B cell (primary cell): ENCODE measurements at regions of chr5 and their contacts with region 1.

Region 1: DNA sequence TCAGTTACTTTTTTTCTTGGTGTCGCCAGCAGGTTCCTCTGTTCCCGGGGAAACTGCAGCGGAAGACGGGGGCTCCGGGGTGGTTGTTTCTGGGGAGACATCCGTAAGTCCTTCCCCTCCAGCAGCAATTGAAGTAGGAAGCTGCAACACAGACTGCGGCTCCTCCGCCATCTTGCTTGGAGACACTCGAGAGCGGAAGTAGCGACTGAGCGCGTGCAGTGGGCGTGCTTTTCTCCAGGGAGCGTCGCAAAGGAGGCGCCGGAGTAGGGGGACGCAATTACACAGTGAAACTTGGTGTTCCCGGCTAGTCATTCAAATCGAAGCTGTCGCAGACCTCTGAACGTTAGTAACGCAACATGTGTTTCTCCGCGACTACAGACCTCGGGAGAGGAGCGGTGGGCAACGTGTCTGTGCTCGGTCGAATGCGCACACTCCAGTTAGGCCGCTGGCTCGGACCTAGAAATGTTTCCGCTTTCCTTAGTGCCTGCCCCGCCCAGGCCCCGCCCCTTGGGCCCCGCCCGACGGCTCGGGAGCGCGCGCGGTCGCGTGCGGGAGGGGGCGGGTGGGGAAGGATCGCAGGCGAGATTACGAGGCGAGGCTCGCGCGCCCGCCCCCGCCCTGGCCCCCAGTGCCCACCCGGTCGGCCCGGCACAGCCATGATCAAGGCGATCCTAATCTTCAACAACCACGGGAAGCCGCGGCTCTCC is at the starts of genes AP3S1 and ATG12:
- DNase-seq: peak; percentile 98
- ATAC-seq: peak; percentile 81
- H3K4me3 ChIP-seq: peak within 1 kb of the TSS; percentile 81 to 96 (median 93)
- H3K4me3 Mint-ChIP-seq: peak within 1 kb of the TSS; percentile 100
- H3K27ac ChIP-seq: peak within 1 kb of the TSS; percentile 89 to 94
- H3K27ac Mint-ChIP-seq: peak within 1 kb of the TSS; percentile 100
- H3K4me1 ChIP-seq: peaks cover 41 to 45% of the 10 kb centered on the region in 2 donors
- H3K4me1 Mint-ChIP-seq: peaks cover 72% of the 10 kb centered on the region
- H3K27me3 ChIP-seq: no peaks in the 10 kb centered on the region
- H3K27me3 Mint-ChIP-seq: no peaks in the 10 kb centered on the region
- CTCF ChIP-seq: no peak
- total RNA-seq, gene AP3S1: 37.1 and 47.6 TPM in 2 replicates
- total RNA-seq, gene ATG12: 97.5 and 101 TPM in 2 replicates

Region 2: DNA sequence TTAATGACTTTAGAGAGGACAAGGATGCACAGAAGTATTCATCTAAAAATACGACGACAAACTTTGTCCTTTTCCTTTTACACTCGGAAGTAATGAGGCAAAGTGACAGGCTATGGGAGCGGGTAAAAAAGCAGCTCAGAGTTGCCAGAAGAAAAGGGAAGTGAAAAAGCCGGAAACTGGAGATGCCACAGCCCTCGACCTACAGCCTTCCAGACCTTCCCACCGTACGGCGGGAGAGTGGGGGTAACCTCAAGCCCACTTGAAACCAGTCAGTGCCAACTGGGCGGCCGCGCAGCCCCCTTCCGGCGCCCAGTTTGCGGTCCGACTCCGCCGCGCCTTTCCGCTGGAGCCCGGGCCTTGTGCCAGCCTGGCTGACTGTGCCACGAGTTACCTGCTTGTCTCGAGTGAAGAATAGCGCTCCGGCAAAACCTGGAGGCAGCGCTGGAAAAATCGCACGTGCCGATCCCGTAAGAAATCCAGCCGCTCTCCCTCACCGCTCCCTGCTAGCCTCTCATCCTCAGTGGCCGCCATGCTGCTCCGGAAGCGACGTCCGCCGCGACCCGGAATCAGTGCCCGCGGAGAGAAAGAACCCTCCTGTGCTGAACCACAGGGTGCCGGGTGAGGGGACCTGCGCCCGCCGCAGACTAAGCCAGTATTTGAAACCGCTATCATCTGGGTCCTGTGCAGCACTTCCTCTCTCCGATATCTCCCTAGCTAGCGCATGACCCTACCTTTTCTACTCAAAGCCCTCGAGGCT is 579.0 kb before region 1 on chr5 and contains the start of gene PGGT1B:
- CTCF ChIA-PET with region 1: no interaction called
- POLR2A ChIA-PET with region 1: no interaction called
- intact Hi-C with region 1: loop called (anchors 1 kb)
- DNase-seq: peak; percentile 84
- ATAC-seq: peak; percentile 90
- H3K4me3 ChIP-seq: peak within 1 kb of the TSS; percentile 78 to 97 (median 87)
- H3K4me3 Mint-ChIP-seq: peak within 1 kb of the TSS; percentile 92
- H3K27ac ChIP-seq: peak within 1 kb of the TSS; percentile 88 to 92
- H3K27ac Mint-ChIP-seq: peak within 1 kb of the TSS; percentile 92
- H3K4me1 ChIP-seq: peaks cover 20 to 26% of the 10 kb centered on the region in 2 donors
- H3K4me1 Mint-ChIP-seq: peaks cover 49% of the 10 kb centered on the region
- H3K27me3 ChIP-seq: no peaks in the 10 kb centered on the region
- H3K27me3 Mint-ChIP-seq: no peaks in the 10 kb centered on the region
- CTCF ChIP-seq: no peak
- total RNA-seq, gene PGGT1B: 63.4 and 64.8 TPM in 2 replicates

Region 3: DNA sequence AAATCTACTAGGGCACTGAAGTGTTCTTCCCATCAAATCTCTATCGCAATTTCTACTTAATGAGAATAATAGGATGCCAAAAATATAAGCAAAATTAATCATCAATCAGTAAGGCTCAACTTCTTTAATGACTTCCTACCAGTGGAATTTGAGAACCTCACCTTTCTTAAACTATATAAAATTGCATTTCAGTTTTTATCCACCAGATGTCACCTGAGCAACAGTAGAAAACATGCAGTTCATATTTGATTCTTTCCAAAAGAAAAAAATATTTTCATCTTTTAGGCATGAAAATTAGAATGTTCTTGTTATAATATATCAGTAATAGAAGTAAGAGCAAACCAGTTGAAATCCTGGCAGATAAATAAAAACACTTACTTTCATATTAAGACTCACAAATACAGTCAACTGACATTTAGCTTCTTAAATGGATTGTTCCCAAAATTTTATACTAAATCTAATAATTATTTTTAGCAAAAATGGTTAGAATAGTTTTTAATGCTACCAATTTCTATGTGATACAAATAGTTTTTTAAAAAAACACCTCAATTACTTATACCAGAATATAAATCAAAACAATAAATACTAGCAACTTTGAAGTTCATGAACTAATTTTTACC is 531.7 kb before region 1 on chr5:
- CTCF ChIA-PET with region 1: interaction called, 4 read pairs
- POLR2A ChIA-PET with region 1: no interaction called
- intact Hi-C with region 1: loop called (anchors 2 kb)
- DNase-seq: peak; percentile 63
- ATAC-seq: peak; percentile 54
- H3K4me3 ChIP-seq: no peak overlapping the region
- H3K4me3 Mint-ChIP-seq: no peak overlapping the region
- H3K27ac ChIP-seq: no peak overlapping the region
- H3K27ac Mint-ChIP-seq: no peak overlapping the region
- H3K4me1 ChIP-seq: no peaks in the 10 kb centered on the region
- H3K4me1 Mint-ChIP-seq: no peaks in the 10 kb centered on the region
- H3K27me3 ChIP-seq: peaks cover 0 to 5% (median 3%) of the 10 kb centered on the region in 4 experiments
- H3K27me3 Mint-ChIP-seq: peaks cover 3% of the 10 kb centered on the region
- CTCF ChIP-seq: peak; percentile 89

Region 4: DNA sequence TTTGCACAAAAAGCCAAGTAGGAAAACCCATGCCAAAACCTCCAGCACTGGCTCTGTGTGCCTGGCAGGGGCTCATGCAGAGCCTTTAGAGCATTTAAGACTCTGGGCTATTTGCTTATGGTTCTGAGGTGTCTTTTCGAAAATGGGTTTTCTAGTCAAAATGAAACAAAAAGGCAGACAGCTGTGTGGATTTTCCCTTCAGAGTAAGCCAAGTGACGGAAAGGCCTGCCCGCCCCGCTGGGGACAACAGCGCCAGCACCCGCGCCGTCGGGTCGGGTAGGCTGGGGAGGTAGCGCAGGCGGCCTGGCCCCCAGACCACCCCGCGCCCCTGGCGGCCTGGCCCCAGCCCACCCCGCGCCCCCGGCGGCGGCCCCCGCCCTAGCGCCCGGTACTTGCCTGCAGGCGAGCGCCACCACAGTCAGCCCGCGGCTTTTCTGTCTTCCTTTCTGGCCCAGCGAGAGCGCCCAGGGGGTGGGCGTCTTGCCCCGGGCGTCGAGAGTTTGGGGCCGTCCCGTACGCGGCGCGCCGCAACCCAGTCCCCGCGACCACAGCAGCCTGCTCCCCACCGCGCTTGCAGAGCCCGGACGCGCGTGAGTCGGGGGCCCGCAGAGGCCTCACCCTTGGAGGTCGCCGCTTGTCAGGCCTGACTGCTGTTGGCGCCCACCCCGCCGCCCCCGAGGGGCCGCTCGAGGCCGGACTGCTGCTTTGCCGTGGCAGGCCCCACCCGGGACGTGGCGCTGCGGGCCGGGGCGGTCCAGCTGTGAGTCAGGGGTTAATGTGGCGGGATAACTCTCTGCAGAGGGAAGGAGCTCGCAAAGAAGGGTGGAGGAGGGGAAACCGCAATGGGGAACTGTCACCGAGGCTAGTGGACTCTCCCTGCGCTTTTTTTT is 239.6 kb before region 1 on chr5 and contains the start of gene TICAM2:
- CTCF ChIA-PET with region 1: interaction called, 4 read pairs
- POLR2A ChIA-PET with region 1: no interaction called
- intact Hi-C with region 1: loop called (anchors 1 kb)
- DNase-seq: peak; percentile 86
- ATAC-seq: peak; percentile 80
- H3K4me3 ChIP-seq: peak within 1 kb of the TSS; percentile 51 to 87 (median 82)
- H3K4me3 Mint-ChIP-seq: peak within 1 kb of the TSS; percentile 94
- H3K27ac ChIP-seq: peak within 1 kb of the TSS; percentile 71 to 91
- H3K27ac Mint-ChIP-seq: peak within 1 kb of the TSS; percentile 98
- H3K4me1 ChIP-seq: peaks cover 38% of the 10 kb centered on the region in 2 donors
- H3K4me1 Mint-ChIP-seq: peaks cover 43% of the 10 kb centered on the region
- H3K27me3 ChIP-seq: no peaks in the 10 kb centered on the region
- H3K27me3 Mint-ChIP-seq: no peaks in the 10 kb centered on the region
- CTCF ChIP-seq: peak; percentile 54
- total RNA-seq, gene TICAM2: 4.9 and 5.4 TPM in 2 replicates

Region 5: DNA sequence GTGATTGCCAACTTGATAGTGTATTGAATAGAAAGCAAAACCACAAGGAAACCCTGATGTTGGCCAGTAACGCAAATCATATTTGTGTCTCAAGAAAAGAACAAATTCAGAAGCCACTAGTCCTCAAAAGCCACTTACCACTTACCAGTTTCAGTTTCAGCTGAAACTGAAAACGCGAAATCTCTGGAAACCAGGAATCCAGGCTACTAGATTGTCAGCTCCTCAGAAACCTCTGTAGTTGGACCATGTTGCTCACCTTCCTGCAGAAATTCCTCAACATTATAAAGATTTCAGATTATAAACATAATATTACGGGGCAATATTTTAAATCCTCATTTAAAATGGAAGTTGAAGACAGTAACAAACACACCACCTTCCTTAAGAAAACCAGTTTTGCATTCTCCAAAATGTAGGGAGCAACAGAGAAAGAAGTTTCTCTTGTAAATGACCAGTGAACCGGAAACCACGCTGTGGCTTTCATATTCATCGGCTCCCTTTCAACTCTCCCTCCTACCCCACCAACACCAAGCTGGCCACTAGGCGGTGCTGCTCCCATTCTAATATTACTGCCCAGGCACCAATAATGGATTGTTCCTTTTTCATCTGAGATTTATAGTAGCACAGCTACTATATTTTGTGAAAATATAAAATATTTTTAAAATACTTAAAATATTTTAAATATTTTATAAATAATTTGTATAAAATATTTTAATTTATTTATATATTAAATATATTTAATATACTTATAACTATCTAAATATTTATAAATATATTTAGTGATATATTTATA is 207.0 kb before region 1 on chr5:
- CTCF ChIA-PET with region 1: interaction called, 21 read pairs
- POLR2A ChIA-PET with region 1: no interaction called
- intact Hi-C with region 1: loop called (anchors 1 kb)
- DNase-seq: peak; percentile 87
- ATAC-seq: peak; percentile 99
- H3K4me3 ChIP-seq: peak overlapping the region in 4 of 5 experiments; percentile 15 to 43 (median 20)
- H3K4me3 Mint-ChIP-seq: peak overlapping the region; percentile 67
- H3K27ac ChIP-seq: no peak overlapping the region
- H3K27ac Mint-ChIP-seq: no peak overlapping the region
- H3K4me1 ChIP-seq: peaks cover 5 to 6% of the 10 kb centered on the region in 2 donors
- H3K4me1 Mint-ChIP-seq: peaks cover 7% of the 10 kb centered on the region
- H3K27me3 ChIP-seq: peaks cover 0 to 12% (median 6%) of the 10 kb centered on the region in 4 experiments
- H3K27me3 Mint-ChIP-seq: peaks cover 19% of the 10 kb centered on the region
- CTCF ChIP-seq: peak; percentile 94

Region 6: DNA sequence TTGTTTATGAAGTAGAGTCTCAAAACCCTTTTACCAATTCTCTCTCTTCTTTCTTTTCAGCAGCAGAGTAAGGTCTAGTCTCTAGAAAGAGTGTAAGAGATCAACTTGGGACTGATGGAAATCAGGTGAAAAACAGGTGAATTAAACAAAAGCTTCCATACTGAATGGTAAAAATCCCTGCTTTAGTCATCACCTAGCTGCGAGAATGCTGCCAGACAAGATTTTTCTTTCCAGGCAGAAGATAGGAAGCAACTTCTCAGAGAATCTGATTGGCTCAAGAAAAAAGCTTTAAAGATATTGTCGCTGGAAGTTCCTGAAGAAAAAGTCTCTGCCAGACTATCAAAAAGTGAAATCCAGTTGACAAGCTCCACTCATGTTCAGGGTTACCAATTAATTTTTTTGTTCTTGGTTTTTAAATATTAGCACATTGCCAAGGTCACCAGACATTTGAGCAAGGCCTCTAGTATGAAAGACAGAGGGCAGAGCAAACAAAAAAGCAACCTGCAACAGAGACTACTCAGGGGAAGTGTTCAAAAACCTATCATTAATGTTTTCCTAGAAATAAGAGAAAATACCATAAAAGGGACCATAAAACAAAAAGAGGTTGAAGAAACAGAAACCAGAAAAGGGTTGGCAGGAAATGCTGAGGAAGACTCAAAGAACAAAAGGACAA is 34.4 kb before region 1 on chr5:
- CTCF ChIA-PET with region 1: no interaction called
- POLR2A ChIA-PET with region 1: no interaction called
- intact Hi-C with region 1: no loop called
- DNase-seq: no peak
- ATAC-seq: no peak
- H3K4me3 ChIP-seq: no peak overlapping the region
- H3K4me3 Mint-ChIP-seq: no peak overlapping the region
- H3K27ac ChIP-seq: no peak overlapping the region
- H3K27ac Mint-ChIP-seq: no peak overlapping the region
- H3K4me1 ChIP-seq: no peaks in the 10 kb centered on the region
- H3K4me1 Mint-ChIP-seq: no peaks in the 10 kb centered on the region
- H3K27me3 ChIP-seq: peaks cover 0 to 3% (median 1%) of the 10 kb centered on the region in 4 experiments
- H3K27me3 Mint-ChIP-seq: peaks cover 22% of the 10 kb centered on the region
- CTCF ChIP-seq: no peak

Region 7: DNA sequence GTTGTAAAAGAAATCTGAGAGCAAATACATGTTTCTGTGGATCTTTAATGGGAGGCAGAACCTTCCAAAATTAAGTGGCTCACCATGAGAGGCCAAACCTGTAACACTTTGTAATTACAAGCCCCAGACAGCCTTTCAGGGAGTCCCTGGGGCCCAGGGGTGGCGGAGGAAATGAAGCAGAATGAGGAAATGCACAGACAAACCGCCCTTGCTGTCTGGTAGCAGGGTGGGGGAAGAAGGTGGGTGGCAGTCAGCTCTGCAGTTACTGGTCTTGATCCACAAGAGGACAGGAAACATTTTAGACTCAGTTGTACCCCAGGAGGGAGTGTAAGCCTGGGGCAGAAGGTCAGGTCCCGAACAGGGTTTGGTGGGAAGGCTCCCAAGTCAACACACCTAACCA is 197.3 kb after region 1 on chr5:
- CTCF ChIA-PET with region 1: interaction called, 3 read pairs
- POLR2A ChIA-PET with region 1: no interaction called
- intact Hi-C with region 1: loop called (anchors 2 kb)
- DNase-seq: peak; percentile 70
- ATAC-seq: peak; percentile 98
- H3K4me3 ChIP-seq: peak overlapping the region in 1 of 5 experiments; percentile 20
- H3K4me3 Mint-ChIP-seq: peak overlapping the region; percentile 65
- H3K27ac ChIP-seq: peak overlapping the region; percentile 34 to 67
- H3K27ac Mint-ChIP-seq: peak overlapping the region; percentile 90
- H3K4me1 ChIP-seq: peaks cover 32 to 33% of the 10 kb centered on the region in 2 donors
- H3K4me1 Mint-ChIP-seq: peaks cover 50% of the 10 kb centered on the region
- H3K27me3 ChIP-seq: no peaks in the 10 kb centered on the region
- H3K27me3 Mint-ChIP-seq: no peaks in the 10 kb centered on the region
- CTCF ChIP-seq: no peak

Region 8: DNA sequence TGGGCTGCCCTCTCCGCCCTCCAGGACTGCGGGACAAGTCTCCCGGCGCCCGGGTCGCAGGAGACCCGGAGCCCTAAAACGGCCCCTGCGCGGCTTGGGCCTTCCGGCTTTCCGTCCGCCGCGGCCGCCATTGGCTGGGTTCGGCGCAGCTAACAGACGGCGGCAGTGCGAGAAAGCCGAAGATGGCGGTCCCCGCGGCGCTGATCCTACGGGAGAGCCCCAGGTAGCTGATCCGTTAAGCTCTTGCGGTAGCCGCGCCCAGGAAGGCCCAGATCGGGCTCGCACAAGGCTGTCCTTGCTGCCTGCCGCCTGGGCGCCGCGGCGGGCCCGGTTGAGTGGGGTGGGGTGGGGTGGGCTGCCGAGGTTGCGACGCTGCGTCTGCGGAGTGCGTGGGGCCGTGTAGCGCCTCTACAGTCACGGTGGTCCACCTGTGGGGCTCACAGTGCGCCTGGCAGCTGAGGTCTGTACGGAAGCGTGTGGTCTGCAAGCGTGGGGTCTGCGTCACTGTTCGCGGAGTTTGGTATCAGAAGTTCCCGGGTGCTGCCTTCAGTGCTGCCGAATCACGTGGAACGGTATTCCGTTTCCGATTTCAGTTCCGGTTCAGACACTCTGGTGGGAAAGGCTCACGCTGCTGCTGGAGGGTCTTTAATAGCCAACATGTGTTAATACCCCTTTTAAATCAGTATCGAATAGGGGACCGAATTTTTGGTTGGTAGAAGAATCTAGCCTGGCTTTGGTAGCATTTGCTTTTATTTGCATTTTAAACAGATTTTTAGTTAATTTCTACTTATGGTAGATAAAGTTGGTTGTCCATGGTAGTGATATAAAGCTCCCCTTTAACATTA is 243.6 kb after region 1 on chr5 and contains the start of gene COMMD10:
- CTCF ChIA-PET with region 1: interaction called, 3 read pairs
- POLR2A ChIA-PET with region 1: no interaction called
- intact Hi-C with region 1: loop called (anchors 1 kb)
- DNase-seq: peak; percentile 95
- ATAC-seq: peak; percentile 89
- H3K4me3 ChIP-seq: peak within 1 kb of the TSS; percentile 67 to 90 (median 85)
- H3K4me3 Mint-ChIP-seq: peak within 1 kb of the TSS; percentile 96
- H3K27ac ChIP-seq: peak within 1 kb of the TSS; percentile 96
- H3K27ac Mint-ChIP-seq: peak within 1 kb of the TSS; percentile 99
- H3K4me1 ChIP-seq: peaks cover 16 to 19% of the 10 kb centered on the region in 2 donors
- H3K4me1 Mint-ChIP-seq: peaks cover 39% of the 10 kb centered on the region
- H3K27me3 ChIP-seq: no peaks in the 10 kb centered on the region
- H3K27me3 Mint-ChIP-seq: no peaks in the 10 kb centered on the region
- CTCF ChIP-seq: no peak
- total RNA-seq, gene COMMD10: 48.2 and 48.7 TPM in 2 replicates